ENCODE measurements at regions of chr4 and their contacts with region 1.

Region 1: GRCh38 chr4:76949276-76950051 is at the start of gene SEPTIN11:
- DNase-seq: peak; percentile 76 to 93 (median 82)
- ATAC-seq: peak; percentile 68 to 72
- H3K4me3 Mint-ChIP-seq: peak within 1 kb of the TSS; percentile 84 to 96 (median 90)
- H3K27ac Mint-ChIP-seq: peak within 1 kb of the TSS; percentile 59 to 93 (median 90)
- H3K4me1 Mint-ChIP-seq: peaks cover 17 to 35% (median 18%) of the 10 kb centered on the region in 4 donors
- H3K27me3 Mint-ChIP-seq: no peaks in the 10 kb centered on the region
- polyA plus RNA-seq, gene SEPTIN11: 44.8 to 49.5 (median 46.0) TPM

Region 2: DNA sequence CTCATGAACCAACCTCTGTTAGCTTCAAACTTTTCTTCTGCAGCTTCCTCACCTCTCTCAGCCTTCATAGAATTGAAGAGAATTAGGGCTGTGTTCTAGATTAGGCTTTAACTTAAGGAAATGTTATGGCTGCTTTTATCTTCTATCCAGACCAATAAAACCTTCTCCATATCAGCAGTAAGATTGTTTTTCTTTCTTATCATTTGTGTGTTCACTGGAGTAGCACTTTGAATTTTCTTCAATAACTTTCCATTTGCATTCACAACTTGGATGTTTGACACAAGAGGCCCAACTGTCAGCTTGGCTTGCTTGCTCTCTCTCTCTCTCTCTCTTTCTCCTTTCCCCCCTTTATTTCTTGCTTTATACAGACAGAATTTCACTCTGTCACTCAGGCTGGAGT is 28.7 kb before region 1 on chr4:
- POLR2A ChIA-PET with region 1: no interaction called
- DNase-seq: no peak
- ATAC-seq: no peak
- H3K4me3 Mint-ChIP-seq: no peak overlapping the region
- H3K27ac Mint-ChIP-seq: peak overlapping the region in 1 of 10 donors; percentile 6
- H3K4me1 Mint-ChIP-seq: peaks cover 0 to 2% (median 0%) of the 10 kb centered on the region in 4 donors
- H3K27me3 Mint-ChIP-seq: peaks cover 0 to 2% (median 0%) of the 10 kb centered on the region in 5 donors

Region 3: DNA sequence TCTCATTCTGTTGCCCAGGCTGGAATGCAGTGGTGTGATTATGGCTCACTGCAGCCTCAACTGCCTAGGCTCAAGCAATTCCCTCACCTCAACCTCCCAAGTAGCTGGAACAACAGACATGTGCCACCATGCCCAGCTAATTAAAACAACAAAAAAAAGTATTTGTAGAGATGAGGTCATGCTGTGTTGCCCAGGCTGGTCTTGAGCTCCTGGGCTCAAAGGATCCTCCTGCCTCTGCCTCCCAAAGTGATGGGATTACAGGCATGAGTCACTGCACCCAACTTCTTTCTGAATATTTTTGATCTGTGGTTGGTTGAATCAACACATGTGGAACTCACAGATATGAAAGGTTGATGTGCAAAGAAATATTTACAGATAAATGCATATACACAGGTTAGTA is 18.4 kb before region 1 on chr4:
- POLR2A ChIA-PET with region 1: no interaction called
- DNase-seq: no peak
- ATAC-seq: no peak
- H3K4me3 Mint-ChIP-seq: no peak overlapping the region
- H3K27ac Mint-ChIP-seq: no peak overlapping the region
- H3K4me1 Mint-ChIP-seq: peaks cover 0 to 3% (median 0%) of the 10 kb centered on the region in 4 donors
- H3K27me3 Mint-ChIP-seq: peaks cover 0 to 7% (median 0%) of the 10 kb centered on the region in 5 donors

Region 4: DNA sequence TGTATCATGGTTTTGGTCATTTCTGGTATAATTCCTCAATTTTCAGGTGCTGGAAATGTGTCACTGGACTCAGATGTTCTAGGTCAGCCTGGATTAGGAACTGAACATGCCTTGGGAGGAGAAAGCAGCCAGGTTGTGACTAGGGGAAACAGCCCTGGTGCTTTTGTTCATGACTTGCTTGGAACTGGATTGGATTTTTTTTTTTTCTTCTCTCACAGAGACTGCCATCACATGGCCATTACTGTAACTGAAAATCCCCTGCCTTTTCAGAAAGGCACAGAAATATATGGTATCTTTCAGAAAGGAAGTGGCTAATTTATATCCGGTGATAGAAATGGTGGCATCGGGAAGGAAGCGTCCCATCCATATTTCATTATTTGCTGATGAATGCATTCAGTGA is 34.7 kb after region 1 on chr4:
- POLR2A ChIA-PET with region 1: interaction called, 29 read pairs
- DNase-seq: peak in 2 of 10 donors; percentile 4 to 37
- ATAC-seq: peak in 1 of 2 donors; percentile 60
- H3K4me3 Mint-ChIP-seq: peak overlapping the region in 9 of 10 donors; percentile 12 to 74 (median 49)
- H3K27ac Mint-ChIP-seq: peak overlapping the region in 9 of 10 donors; percentile 13 to 75 (median 66)
- H3K4me1 Mint-ChIP-seq: peaks cover 41 to 89% (median 82%) of the 10 kb centered on the region in 4 donors
- H3K27me3 Mint-ChIP-seq: no peaks in the 10 kb centered on the region

Region 5: GRCh38 chr4:76993787-76994641 is 44.5 kb after region 1 on chr4:
- POLR2A ChIA-PET with region 1: interaction called, 29 read pairs
- DNase-seq: peak; percentile 14 to 87 (median 65)
- ATAC-seq: peak; percentile 76
- H3K4me3 Mint-ChIP-seq: peak overlapping the region; percentile 69 to 89 (median 80)
- H3K27ac Mint-ChIP-seq: peak overlapping the region; percentile 76 to 94 (median 91)
- H3K4me1 Mint-ChIP-seq: peaks cover 32 to 75% (median 67%) of the 10 kb centered on the region in 4 donors
- H3K27me3 Mint-ChIP-seq: no peaks in the 10 kb centered on the region